Naive thymus-derived CD4-positive, alpha-beta T cell (primary cell): ENCODE measurements at regions of chr9 and their contacts with region 1.

Region 1: DNA sequence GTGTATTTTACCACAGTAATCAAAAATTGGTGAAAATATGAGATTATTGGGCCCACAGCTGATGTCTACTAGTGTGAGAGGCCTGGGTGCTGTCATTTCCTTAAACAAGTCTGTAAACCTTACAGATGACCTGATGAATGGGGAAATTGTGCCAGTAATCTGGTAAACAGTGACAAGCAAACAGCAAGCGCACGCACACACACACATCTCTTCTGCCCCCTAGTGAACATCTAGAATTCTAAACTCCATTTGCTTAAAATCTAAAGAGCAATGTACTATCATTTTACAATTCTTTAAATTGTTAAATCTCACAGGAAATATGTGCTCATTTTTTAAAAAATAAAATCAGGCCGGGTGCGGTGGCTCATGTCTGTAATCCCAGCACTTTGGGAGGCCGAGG is 7.5 kb upstream of the RAPGEF1 start:
- DNase-seq: peak in 5 of 9 donors; percentile 33 to 51 (median 44)
- ATAC-seq: peak; percentile 75
- H3K4me3 ChIP-seq: no peak overlapping the region
- H3K4me3 Mint-ChIP-seq: no peak overlapping the region
- H3K27ac ChIP-seq: no peak overlapping the region
- H3K27ac Mint-ChIP-seq: peak overlapping the region in 3 of 9 donors; percentile 19 to 68 (median 56)
- H3K4me1 ChIP-seq: peaks cover 17 to 27% of the 10 kb centered on the region in 2 donors
- H3K4me1 Mint-ChIP-seq: peaks cover 26 to 45% (median 33%) of the 10 kb centered on the region in 7 donors
- H3K27me3 ChIP-seq: no peaks in the 10 kb centered on the region
- H3K27me3 Mint-ChIP-seq: peaks cover 0 to 3% (median 0%) of the 10 kb centered on the region in 5 donors

Region 2: DNA sequence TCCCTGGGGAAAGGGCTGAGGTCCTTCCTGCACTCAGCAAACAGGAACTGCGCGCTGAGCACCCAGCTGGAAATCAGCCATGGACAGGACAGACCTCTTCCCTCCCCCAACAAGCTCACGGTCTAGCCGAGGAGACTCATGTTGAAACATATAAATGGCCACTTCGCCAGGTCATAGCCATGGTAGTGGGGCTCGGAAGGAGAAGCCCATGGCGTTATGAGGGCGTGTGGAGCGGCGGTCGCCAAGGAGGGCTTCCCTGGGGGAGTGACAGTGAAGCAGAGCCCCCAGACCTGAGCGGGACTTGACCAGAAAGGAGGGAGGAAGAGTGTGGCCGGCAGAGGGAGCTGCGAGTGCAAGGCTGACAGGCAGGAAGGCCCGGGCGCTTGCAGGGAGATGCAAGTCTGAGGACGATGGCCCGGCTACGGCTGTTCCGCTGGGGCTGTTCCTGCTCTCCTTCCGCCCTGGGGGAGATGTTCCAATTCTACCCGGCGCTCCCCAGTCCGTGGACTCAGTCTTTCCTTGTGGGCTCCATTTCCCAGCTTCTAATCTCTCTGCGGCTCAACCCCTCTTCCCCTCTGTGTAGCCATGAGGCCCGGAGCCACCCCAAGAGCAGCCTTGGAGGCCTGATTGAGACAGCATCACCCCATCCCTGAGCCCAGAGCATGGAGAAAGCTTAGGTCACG is 397.3 kb before region 1 on chr9:
- CTCF ChIA-PET with region 1: no interaction called
- POLR2A ChIA-PET with region 1: no interaction called
- intact Hi-C with region 1: loop called (anchors 1 kb)
- DNase-seq: peak; percentile 74 to 87 (median 82)
- ATAC-seq: peak; percentile 99
- H3K4me3 ChIP-seq: no peak overlapping the region
- H3K4me3 Mint-ChIP-seq: peak overlapping the region in 8 of 10 donors; percentile 12 to 80 (median 57)
- H3K27ac ChIP-seq: no peak overlapping the region
- H3K27ac Mint-ChIP-seq: peak overlapping the region in 5 of 9 donors; percentile 65 to 78 (median 70)
- H3K4me1 ChIP-seq: peaks cover 4 to 9% of the 10 kb centered on the region in 2 donors
- H3K4me1 Mint-ChIP-seq: peaks cover 0 to 15% (median 8%) of the 10 kb centered on the region in 7 donors
- H3K27me3 ChIP-seq: no peaks in the 10 kb centered on the region
- H3K27me3 Mint-ChIP-seq: peaks cover 0 to 5% (median 0%) of the 10 kb centered on the region in 5 donors

Region 3: GRCh38 chr9:131585375-131585774 is 162.0 kb before region 1 on chr9:
- CTCF ChIA-PET with region 1: interaction called, 40 read pairs
- POLR2A ChIA-PET with region 1: interaction called, 18 read pairs
- intact Hi-C with region 1: no loop called
- DNase-seq: peak; percentile 27 to 63 (median 51)
- ATAC-seq: peak; percentile 88
- H3K4me3 ChIP-seq: peak overlapping the region; percentile 22
- H3K4me3 Mint-ChIP-seq: peak overlapping the region; percentile 70 to 92 (median 77)
- H3K27ac ChIP-seq: peak overlapping the region; percentile 64
- H3K27ac Mint-ChIP-seq: peak overlapping the region; percentile 89 to 95 (median 92)
- H3K4me1 ChIP-seq: peaks cover 28 to 31% of the 10 kb centered on the region in 2 donors
- H3K4me1 Mint-ChIP-seq: peaks cover 16 to 60% (median 38%) of the 10 kb centered on the region in 7 donors
- H3K27me3 ChIP-seq: no peaks in the 10 kb centered on the region
- H3K27me3 Mint-ChIP-seq: no peaks in the 10 kb centered on the region

Region 4: DNA sequence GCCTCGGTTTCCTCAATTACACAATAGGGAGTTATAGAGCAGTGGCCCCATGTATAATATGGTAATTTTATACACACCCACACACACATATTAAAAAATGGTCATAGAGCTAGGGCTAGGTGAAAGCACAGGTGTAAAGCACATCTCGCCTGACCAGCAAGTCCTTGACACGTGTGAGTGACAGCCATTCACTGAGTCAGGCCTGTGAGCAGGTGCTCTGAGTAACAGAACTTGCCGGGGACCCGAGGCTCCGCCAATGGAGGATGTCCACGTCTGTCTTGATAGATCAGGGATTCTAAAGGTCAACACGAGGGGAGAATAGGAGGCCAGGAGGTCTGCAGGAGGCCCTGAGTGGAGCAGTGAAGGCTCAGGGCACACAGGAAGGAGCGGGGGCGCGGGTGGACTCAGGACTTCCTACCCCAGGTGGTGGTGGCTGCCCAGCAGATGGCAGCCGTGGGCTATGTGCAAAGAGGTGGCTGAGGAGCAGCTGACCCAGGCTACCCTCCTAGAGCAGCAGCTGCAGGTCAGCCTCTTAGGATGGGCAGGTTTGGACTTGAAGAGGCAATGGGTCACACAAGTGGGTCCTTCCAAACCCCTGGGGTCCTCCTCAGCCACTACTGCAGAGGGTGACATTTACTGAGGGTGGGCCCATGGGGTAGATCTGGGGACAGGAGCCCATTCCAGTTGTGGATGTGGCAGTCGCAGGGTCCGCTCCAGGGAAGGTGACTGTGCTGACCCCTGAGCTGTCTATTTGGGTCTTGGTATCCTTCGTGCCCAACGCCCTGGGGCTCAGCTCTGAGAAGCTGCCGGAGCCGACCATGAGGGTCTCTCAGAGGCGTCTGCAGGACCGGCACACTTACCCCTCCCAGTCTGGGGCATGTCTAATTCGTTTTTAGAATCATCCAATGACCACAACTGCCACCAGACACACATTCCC is 156.2 kb before region 1 on chr9:
- CTCF ChIA-PET with region 1: interaction called, 40 read pairs
- POLR2A ChIA-PET with region 1: interaction called, 18 read pairs
- intact Hi-C with region 1: loop called (anchors 1 kb)
- DNase-seq: peak; percentile 50 to 78 (median 68)
- ATAC-seq: peak; percentile 95
- H3K4me3 ChIP-seq: no peak overlapping the region
- H3K4me3 Mint-ChIP-seq: peak overlapping the region in 2 of 10 donors; percentile 13 to 31
- H3K27ac ChIP-seq: no peak overlapping the region
- H3K27ac Mint-ChIP-seq: peak overlapping the region; percentile 18 to 90 (median 60)
- H3K4me1 ChIP-seq: peaks cover 12 to 19% of the 10 kb centered on the region in 2 donors
- H3K4me1 Mint-ChIP-seq: peaks cover 18 to 36% (median 33%) of the 10 kb centered on the region in 7 donors
- H3K27me3 ChIP-seq: no peaks in the 10 kb centered on the region
- H3K27me3 Mint-ChIP-seq: no peaks in the 10 kb centered on the region

Region 5: DNA sequence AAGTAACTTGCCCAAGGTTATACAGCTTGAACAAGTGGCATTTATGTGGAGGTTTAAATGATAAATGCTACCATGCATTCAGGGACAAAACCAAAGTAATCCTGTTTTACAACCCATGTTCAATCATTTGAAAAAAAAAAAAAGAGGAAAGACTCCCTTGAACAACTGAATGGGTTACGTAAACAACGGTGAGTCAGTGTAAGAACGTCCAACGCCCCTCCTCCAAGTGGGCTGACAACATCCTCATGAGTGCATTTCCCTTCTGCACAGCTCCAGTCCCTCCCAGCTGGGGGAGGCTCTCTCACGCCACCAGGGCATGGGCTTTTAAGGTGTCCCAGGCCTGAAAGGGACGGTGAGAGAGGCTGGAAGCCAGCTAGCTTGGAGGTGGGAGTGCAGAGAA is 112.1 kb before region 1 on chr9:
- CTCF ChIA-PET with region 1: interaction called, 4 read pairs
- POLR2A ChIA-PET with region 1: no interaction called
- intact Hi-C with region 1: loop called in 1 of 2 experiments (anchors 5 kb)
- DNase-seq: peak; percentile 34 to 76 (median 60)
- ATAC-seq: peak; percentile 98
- H3K4me3 ChIP-seq: no peak overlapping the region
- H3K4me3 Mint-ChIP-seq: peak overlapping the region in 3 of 10 donors; percentile 5 to 50 (median 11)
- H3K27ac ChIP-seq: peak overlapping the region; percentile 36
- H3K27ac Mint-ChIP-seq: peak overlapping the region; percentile 70 to 89 (median 85)
- H3K4me1 ChIP-seq: peaks cover 12 to 20% of the 10 kb centered on the region in 2 donors
- H3K4me1 Mint-ChIP-seq: peaks cover 15 to 51% (median 19%) of the 10 kb centered on the region in 7 donors
- H3K27me3 ChIP-seq: no peaks in the 10 kb centered on the region
- H3K27me3 Mint-ChIP-seq: no peaks in the 10 kb centered on the region

Region 6: DNA sequence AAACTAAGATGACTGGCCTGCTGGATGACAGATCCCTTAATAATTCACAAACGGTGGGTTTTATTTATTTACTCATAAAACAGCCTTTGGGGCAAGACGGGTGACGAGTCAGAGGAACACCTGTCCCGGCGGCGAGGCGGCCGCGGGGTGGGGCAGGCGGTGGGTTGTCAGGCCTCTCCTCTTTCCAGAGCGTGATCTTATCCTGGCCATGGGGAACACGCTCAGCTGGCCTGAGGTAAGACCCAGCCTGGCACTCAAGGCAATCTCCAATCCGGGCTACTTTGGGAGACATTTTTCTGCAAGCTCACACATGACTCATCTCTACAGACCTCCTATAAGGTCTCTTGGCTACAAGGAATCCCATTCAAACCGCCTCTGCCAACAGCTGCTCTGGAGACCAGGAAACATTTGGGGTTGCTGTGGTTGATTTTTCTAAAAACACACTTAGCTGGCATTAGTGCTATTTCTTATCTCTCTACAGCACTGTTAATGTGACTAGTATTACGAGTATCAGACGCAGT is 13.8 kb before region 1 on chr9:
- CTCF ChIA-PET with region 1: interaction called, 35 read pairs
- POLR2A ChIA-PET with region 1: interaction called, 26 read pairs
- intact Hi-C with region 1: no loop called
- DNase-seq: peak in 2 of 9 donors; percentile 14 to 57
- ATAC-seq: peak; percentile 5
- H3K4me3 ChIP-seq: peak overlapping the region; percentile 46
- H3K4me3 Mint-ChIP-seq: peak overlapping the region; percentile 76 to 89 (median 82)
- H3K27ac ChIP-seq: peak overlapping the region; percentile 73
- H3K27ac Mint-ChIP-seq: peak overlapping the region; percentile 84 to 99 (median 90)
- H3K4me1 ChIP-seq: peaks cover 84 to 85% of the 10 kb centered on the region in 2 donors
- H3K4me1 Mint-ChIP-seq: peaks cover 70 to 93% (median 89%) of the 10 kb centered on the region in 7 donors
- H3K27me3 ChIP-seq: no peaks in the 10 kb centered on the region
- H3K27me3 Mint-ChIP-seq: no peaks in the 10 kb centered on the region

Region 7: GRCh38 chr9:132042324-132042723 is 295.0 kb after region 1 on chr9:
- CTCF ChIA-PET with region 1: no interaction called
- POLR2A ChIA-PET with region 1: no interaction called
- intact Hi-C with region 1: no loop called
- DNase-seq: no peak
- ATAC-seq: no peak
- H3K4me3 ChIP-seq: no peak overlapping the region
- H3K4me3 Mint-ChIP-seq: no peak overlapping the region
- H3K27ac ChIP-seq: no peak overlapping the region
- H3K27ac Mint-ChIP-seq: no peak overlapping the region
- H3K4me1 ChIP-seq: no peaks in the 10 kb centered on the region
- H3K4me1 Mint-ChIP-seq: peaks cover 0 to 26% (median 21%) of the 10 kb centered on the region in 7 donors
- H3K27me3 ChIP-seq: no peaks in the 10 kb centered on the region
- H3K27me3 Mint-ChIP-seq: no peaks in the 10 kb centered on the region